Naive thymus-derived CD4-positive, alpha-beta T cell (primary cell): ENCODE measurements at regions of chr3 and their contacts with region 1.

Region 1: GRCh38 chr3:60025096-60026050 is 975.5 kb upstream of the CFAP20DC start:
- DNase-seq: no peak
- ATAC-seq: no peak
- H3K4me3 ChIP-seq: no peak overlapping the region
- H3K4me3 Mint-ChIP-seq: peak overlapping the region; percentile 35 to 82 (median 62)
- H3K27ac ChIP-seq: peak overlapping the region; percentile 61
- H3K27ac Mint-ChIP-seq: peak overlapping the region; percentile 56 to 96 (median 89)
- H3K4me1 ChIP-seq: peaks cover 0 to 69% of the 10 kb centered on the region in 2 donors
- H3K4me1 Mint-ChIP-seq: peaks cover 29 to 100% (median 95%) of the 10 kb centered on the region in 7 donors
- H3K27me3 ChIP-seq: no peaks in the 10 kb centered on the region
- H3K27me3 Mint-ChIP-seq: no peaks in the 10 kb centered on the region

Region 2: GRCh38 chr3:60036803-60037202 is 11.4 kb after region 1 on chr3:
- CTCF ChIA-PET with region 1: no interaction called
- POLR2A ChIA-PET with region 1: interaction called, 4 read pairs
- intact Hi-C with region 1: loop called in 1 of 2 experiments (anchors 1 kb)
- DNase-seq: no peak
- ATAC-seq: no peak
- H3K4me3 ChIP-seq: no peak overlapping the region
- H3K4me3 Mint-ChIP-seq: peak overlapping the region in 2 of 10 donors; percentile 27 to 28
- H3K27ac ChIP-seq: no peak overlapping the region
- H3K27ac Mint-ChIP-seq: peak overlapping the region in 8 of 9 donors; percentile 12 to 91 (median 59)
- H3K4me1 ChIP-seq: peaks cover 0 to 14% of the 10 kb centered on the region in 2 donors
- H3K4me1 Mint-ChIP-seq: peaks cover 0 to 89% (median 79%) of the 10 kb centered on the region in 7 donors
- H3K27me3 ChIP-seq: no peaks in the 10 kb centered on the region
- H3K27me3 Mint-ChIP-seq: no peaks in the 10 kb centered on the region

Region 3: GRCh38 chr3:60046210-60046609 is 20.8 kb after region 1 on chr3:
- CTCF ChIA-PET with region 1: no interaction called
- POLR2A ChIA-PET with region 1: interaction called, 25 read pairs
- intact Hi-C with region 1: loop called in 1 of 2 experiments (anchors 2 kb)
- DNase-seq: no peak
- ATAC-seq: no peak
- H3K4me3 ChIP-seq: no peak overlapping the region
- H3K4me3 Mint-ChIP-seq: peak overlapping the region in 7 of 10 donors; percentile 2 to 66 (median 42)
- H3K27ac ChIP-seq: peak overlapping the region; percentile 15
- H3K27ac Mint-ChIP-seq: peak overlapping the region; percentile 27 to 99 (median 94)
- H3K4me1 ChIP-seq: peaks cover 6 to 50% of the 10 kb centered on the region in 2 donors
- H3K4me1 Mint-ChIP-seq: peaks cover 26 to 96% (median 90%) of the 10 kb centered on the region in 7 donors
- H3K27me3 ChIP-seq: no peaks in the 10 kb centered on the region
- H3K27me3 Mint-ChIP-seq: no peaks in the 10 kb centered on the region